ENCODE measurements at regions of chr1 and their contacts with region 1.

Region 1: GRCh38 chr1:155167166-155168104 is 5.7 kb downstream of the KRTCAP2 start:
- DNase-seq: peak; percentile 70
- H3K4me3 ChIP-seq: peak overlapping the region; percentile 9
- CTCF ChIP-seq: peak; percentile 90

Region 2: DNA sequence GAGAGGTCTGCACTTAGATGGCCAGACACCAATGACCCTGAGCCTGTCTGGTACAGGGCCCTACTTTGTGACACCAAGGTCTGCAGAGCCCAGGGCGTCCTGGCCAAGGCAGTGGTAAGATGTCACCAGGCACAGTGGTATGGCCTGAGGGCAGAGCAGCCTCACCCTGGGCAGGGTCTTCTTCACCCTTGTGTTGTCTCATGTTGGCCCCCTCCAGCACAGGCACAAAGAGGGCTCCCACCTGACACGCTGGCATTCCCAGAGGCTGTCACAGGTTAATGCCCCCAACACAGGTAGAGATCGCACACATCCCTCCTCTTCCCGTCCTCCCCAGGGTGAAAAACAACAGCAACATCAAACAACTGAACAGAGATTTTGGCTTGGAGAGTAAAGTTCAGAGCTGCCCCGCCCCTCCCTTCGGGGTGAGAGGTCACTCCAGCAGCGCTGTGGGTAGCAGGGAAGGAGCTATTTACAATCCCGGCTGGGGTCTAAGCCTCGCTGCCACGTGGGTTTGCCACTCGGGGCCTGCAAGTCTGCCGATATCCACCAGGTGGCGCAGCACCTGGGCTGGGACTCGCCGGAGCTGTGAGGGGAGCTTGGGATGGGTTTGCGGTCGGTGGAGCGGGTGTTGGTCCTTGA is 76.2 kb before region 1 on chr1:
- in situ Hi-C with region 1: loop called (anchors 10 kb)
- DNase-seq: peak; percentile 31
- H3K4me3 ChIP-seq: no peak overlapping the region
- CTCF ChIP-seq: peak; percentile 97

Region 3: GRCh38 chr1:155113450-155113990 is 53.9 kb before region 1 on chr1:
- in situ Hi-C with region 1: loop called (anchors 5 kb)
- DNase-seq: no peak
- H3K4me3 ChIP-seq: no peak overlapping the region
- CTCF ChIP-seq: no peak

Region 4: GRCh38 chr1:155135415-155136028 is 31.9 kb before region 1 on chr1 and contains the start of gene SLC50A1:
- in situ Hi-C with region 1: no loop called
- DNase-seq: peak; percentile 82
- H3K4me3 ChIP-seq: peak within 1 kb of the TSS; percentile 57
- CTCF ChIP-seq: no peak

Region 5: DNA sequence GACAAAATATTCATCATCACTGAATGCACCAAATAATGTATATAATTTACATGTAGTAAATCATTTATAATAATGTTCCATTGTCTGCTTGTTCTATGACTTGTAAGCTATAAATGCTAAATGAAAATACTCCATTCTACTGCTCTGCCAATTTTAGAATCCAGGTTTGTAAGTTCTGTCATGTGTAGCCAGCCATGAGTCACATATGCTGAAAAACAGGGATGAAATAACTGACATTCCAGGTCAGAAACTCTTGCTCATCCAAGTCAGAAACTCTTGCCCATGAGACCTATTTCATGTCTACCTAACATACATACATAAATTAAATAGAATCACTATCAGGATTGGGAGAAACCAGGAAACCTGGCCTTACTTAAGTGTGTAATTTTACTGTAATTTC is 299.6 kb after region 1 on chr1:
- in situ Hi-C with region 1: no loop called
- DNase-seq: peak; percentile 66
- H3K4me3 ChIP-seq: no peak overlapping the region
- CTCF ChIP-seq: no peak